Ascending aorta (tissue), 2 donors: ENCODE measurements at regions of chr7 and their contacts with region 1.

Region 1: GRCh38 chr7:90155206-90155605 is 937 bp downstream of the STEAP1 start:
- DNase-seq: no peak
- H3K4me3 ChIP-seq: no peak overlapping the region
- H3K27ac ChIP-seq: no peak overlapping the region
- H3K4me1 ChIP-seq: no peaks in the 10 kb centered on the region
- H3K27me3 ChIP-seq: no peaks in the 10 kb centered on the region
- CTCF ChIP-seq: no peak

Region 2: GRCh38 chr7:90173127-90173844 is 18.1 kb after region 1 on chr7:
- intact Hi-C with region 1: no loop called
- DNase-seq: no peak
- H3K4me3 ChIP-seq: no peak overlapping the region
- H3K27ac ChIP-seq: no peak overlapping the region
- H3K4me1 ChIP-seq: no peaks in the 10 kb centered on the region
- H3K27me3 ChIP-seq: no peaks in the 10 kb centered on the region
- CTCF ChIP-seq: no peak

Region 3: DNA sequence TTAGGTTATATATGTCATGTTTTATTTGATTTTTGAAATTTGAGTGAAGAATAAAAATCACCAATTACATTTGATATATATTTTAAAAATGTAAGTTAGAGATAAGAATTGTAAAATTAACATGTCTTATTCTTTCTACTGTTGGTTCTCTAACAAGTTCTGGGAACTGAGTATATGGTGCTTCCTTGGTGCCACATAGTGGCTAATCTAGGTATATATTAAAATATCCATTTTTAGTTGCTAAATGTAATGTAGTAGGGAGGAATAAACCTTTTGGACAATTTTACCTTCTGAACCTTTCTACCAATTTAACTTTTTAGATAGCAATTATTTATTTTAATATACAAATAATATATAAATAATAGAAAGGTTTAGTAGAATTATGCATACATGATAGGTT is 107.2 kb after region 1 on chr7:
- intact Hi-C with region 1: loop called (anchors 1 kb)
- DNase-seq: no peak
- H3K4me3 ChIP-seq: no peak overlapping the region
- H3K27ac ChIP-seq: no peak overlapping the region
- H3K4me1 ChIP-seq: peaks cover 0 to 3% of the 10 kb centered on the region in 2 donors
- H3K27me3 ChIP-seq: no peaks in the 10 kb centered on the region
- CTCF ChIP-seq: peak; percentile 31 to 53 (median 52)

Region 4: GRCh38 chr7:90298145-90299038 is 143.2 kb after region 1 on chr7:
- intact Hi-C with region 1: loop called (anchors 10 kb)
- DNase-seq: no peak
- H3K4me3 ChIP-seq: no peak overlapping the region
- H3K27ac ChIP-seq: no peak overlapping the region
- H3K4me1 ChIP-seq: no peaks in the 10 kb centered on the region
- H3K27me3 ChIP-seq: no peaks in the 10 kb centered on the region
- CTCF ChIP-seq: peak in 2 of 3 experiments; percentile 38 to 49

Region 5: GRCh38 chr7:90346336-90347125 is 191.3 kb after region 1 on chr7 and contains the start of gene GTPBP10:
- intact Hi-C with region 1: loop called (anchors 5 kb)
- DNase-seq: peak; percentile 60 to 95
- H3K4me3 ChIP-seq: peak within 1 kb of the TSS; percentile 69 to 74
- H3K27ac ChIP-seq: peak within 1 kb of the TSS; percentile 70 to 86
- H3K4me1 ChIP-seq: peaks cover 3 to 8% of the 10 kb centered on the region in 2 donors
- H3K27me3 ChIP-seq: no peaks in the 10 kb centered on the region
- CTCF ChIP-seq: peak; percentile 58 to 84 (median 80)
- total RNA-seq, gene GTPBP10: 4.5 TPM

Region 6: GRCh38 chr7:90424720-90425119 is 269.5 kb after region 1 on chr7:
- intact Hi-C with region 1: loop called (anchors 1 kb)
- DNase-seq: no peak
- H3K4me3 ChIP-seq: no peak overlapping the region
- H3K27ac ChIP-seq: no peak overlapping the region
- H3K4me1 ChIP-seq: no peaks in the 10 kb centered on the region
- H3K27me3 ChIP-seq: no peaks in the 10 kb centered on the region
- CTCF ChIP-seq: no peak